Activated naive CD8-positive, alpha-beta T cell treated with anti-CD3 and anti-CD28 coated beads, Interleukin-2, amount 10 ng/mL, durations not matched to agents 7 days and 5 days (primary cell): ENCODE measurements at regions of chr17 and their contacts with region 1.

Region 1: DNA sequence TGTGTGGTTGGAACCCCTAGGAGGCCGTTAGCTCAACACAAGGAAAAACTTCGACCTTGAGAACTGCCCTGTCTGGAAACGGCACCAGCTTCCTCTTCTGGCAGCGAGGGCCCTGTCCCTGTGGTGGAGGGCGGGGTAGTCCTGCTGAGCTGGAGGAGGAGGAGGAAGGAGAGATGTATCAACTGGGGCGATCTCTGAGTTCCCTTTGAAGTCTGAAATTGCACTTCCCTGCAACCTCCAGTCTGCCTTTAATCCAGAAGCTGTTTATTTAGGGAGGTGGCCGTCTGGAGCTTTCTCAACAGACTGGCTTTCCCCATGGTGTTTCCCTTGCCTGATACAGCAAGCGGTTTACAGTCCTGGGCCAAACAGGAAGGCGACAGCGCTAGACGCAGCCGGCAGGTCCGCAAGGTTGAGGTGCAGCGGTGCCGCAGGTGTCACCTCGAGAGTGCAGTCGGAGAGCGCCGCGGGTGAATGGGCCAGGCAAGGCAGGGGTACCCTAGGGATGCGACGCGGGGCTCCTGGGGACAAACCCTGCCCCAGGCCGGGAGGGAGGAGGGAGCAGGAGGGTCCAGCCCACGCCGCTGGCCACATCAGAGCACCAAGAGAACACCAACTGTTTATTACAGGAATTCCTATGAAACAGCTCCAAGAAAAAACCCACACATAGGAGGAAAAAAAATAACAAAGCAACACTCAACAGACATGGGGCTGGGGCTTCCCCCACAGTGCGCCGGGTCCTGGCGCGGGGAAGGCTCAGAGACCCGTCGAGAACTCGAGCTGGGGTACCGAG is 11.4 kb upstream of the MRPS23 start:
- DNase-seq: peak; percentile 53
- ATAC-seq: peak; percentile 77
- H3K4me3 Mint-ChIP-seq: peak overlapping the region; percentile 85
- H3K27ac Mint-ChIP-seq: no peak overlapping the region
- H3K4me1 Mint-ChIP-seq: peaks cover 15% of the 10 kb centered on the region
- H3K27me3 Mint-ChIP-seq: peaks cover 46% of the 10 kb centered on the region

Region 2: GRCh38 chr17:57838857-57839570 is 22.2 kb before region 1 on chr17:
- POLR2A ChIA-PET with region 1: no interaction called
- DNase-seq: no peak
- ATAC-seq: no peak
- H3K4me3 Mint-ChIP-seq: no peak overlapping the region
- H3K27ac Mint-ChIP-seq: no peak overlapping the region
- H3K4me1 Mint-ChIP-seq: peaks cover 9% of the 10 kb centered on the region
- H3K27me3 Mint-ChIP-seq: no peaks in the 10 kb centered on the region

Region 3: GRCh38 chr17:57902800-57903759 is 41.9 kb after region 1 on chr17:
- POLR2A ChIA-PET with region 1: no interaction called
- DNase-seq: no peak
- ATAC-seq: peak; percentile 47
- H3K4me3 Mint-ChIP-seq: no peak overlapping the region
- H3K27ac Mint-ChIP-seq: peak overlapping the region; percentile 31
- H3K4me1 Mint-ChIP-seq: peaks cover 22% of the 10 kb centered on the region
- H3K27me3 Mint-ChIP-seq: no peaks in the 10 kb centered on the region

Region 4: GRCh38 chr17:57995076-57995956 is 134.1 kb after region 1 on chr17:
- POLR2A ChIA-PET with region 1: interaction called, 13 read pairs
- DNase-seq: no peak
- ATAC-seq: peak; percentile 81
- H3K4me3 Mint-ChIP-seq: no peak overlapping the region
- H3K27ac Mint-ChIP-seq: peak overlapping the region; percentile 5
- H3K4me1 Mint-ChIP-seq: peaks cover 34% of the 10 kb centered on the region
- H3K27me3 Mint-ChIP-seq: no peaks in the 10 kb centered on the region